Sciatic nerve (tissue), 2 donors: ENCODE measurements at regions of chr12 and their contacts with region 1.

Region 1: GRCh38 chr12:122669397-122670070 is 33.6 kb downstream of the HCAR2 start:
- DNase-seq: no peak
- ATAC-seq: peak; percentile 60

Region 2: DNA sequence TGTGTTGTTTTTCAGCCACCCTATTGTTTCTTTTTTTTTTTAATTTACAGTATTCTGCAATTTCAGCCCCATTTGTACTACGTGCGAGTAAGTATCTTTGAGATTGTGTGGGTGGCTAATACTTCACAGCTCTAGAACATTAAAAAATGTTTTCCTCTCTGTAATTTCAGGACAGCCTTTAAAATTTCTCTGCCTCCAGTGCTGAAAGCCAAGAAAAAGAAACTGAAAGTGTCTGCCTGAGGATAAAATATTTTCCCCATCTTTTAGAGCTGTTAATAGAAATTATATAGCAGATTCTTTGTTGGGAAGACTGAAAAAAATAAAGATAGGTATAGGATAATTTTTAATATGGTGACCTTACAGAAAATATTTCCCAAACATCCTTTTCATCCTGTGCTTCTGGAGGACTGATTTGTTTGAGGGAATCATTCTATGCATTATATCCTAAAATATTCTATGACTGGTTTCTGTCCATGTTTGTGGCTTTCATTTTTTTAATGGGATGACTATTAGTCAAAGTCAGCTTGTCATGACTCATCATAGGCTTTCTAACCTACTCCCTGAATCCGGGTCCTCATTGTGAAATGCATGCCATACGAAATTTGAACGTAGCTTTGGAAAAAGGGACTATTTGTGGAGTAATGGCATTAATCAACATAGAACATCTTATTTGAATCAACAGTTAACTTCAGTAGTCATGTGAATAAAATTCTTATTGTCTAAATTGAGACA is 990.6 kb after region 1 on chr12:
- intact Hi-C with region 1: loop called (anchors 5 kb)
- DNase-seq: no peak
- ATAC-seq: no peak